ENCODE measurements at regions of chr1 and their contacts with region 1.

Region 1: GRCh38 chr1:222009105-222009730 is 267.3 kb upstream of the DUSP10 start:
- DNase-seq: peak; percentile 53
- ATAC-seq: peak; percentile 80
- H3K4me3 Mint-ChIP-seq: no peak overlapping the region
- H3K27ac Mint-ChIP-seq: no peak overlapping the region
- H3K4me1 Mint-ChIP-seq: no peaks in the 10 kb centered on the region
- H3K27me3 Mint-ChIP-seq: peaks cover 4% of the 10 kb centered on the region
- CTCF ChIP-seq: peak; percentile 52

Region 2: GRCh38 chr1:221478050-221478949 is 530.9 kb before region 1 on chr1:
- CTCF ChIA-PET with region 1: interaction called, 7 read pairs
- POLR2A ChIA-PET with region 1: no interaction called
- intact Hi-C with region 1: loop called (anchors 10 kb)
- DNase-seq: peak; percentile 67
- ATAC-seq: peak; percentile 100
- H3K4me3 Mint-ChIP-seq: no peak overlapping the region
- H3K27ac Mint-ChIP-seq: no peak overlapping the region
- H3K4me1 Mint-ChIP-seq: no peaks in the 10 kb centered on the region
- H3K27me3 Mint-ChIP-seq: peaks cover 7% of the 10 kb centered on the region
- CTCF ChIP-seq: peak; percentile 59

Region 3: DNA sequence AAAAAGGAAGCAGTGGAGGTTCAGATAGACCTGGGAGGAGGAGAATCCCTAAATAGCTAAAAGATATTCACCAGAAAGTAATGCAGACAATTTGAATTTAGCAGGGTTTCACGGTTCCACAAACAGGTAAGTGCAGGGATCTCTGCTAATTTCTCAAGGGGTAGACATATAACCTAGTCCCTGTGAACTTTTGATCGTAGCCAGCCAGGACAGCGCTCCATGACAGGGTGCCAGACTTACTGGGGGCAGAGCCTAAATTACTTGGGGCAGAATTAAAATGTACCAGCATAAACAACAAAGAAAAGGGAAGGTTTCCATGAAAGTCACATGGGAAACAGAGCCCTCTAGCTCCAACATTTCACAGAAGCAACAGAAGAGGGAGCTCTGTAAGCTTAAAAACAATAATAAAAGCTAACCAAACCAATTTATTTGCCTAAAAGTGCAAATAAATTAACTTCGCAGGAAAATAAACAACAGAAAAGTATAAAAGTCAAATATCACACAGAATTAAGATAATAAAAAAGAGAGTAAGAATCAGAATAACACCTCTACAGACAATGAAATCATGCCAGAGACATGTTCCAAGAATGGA is 465.6 kb before region 1 on chr1:
- CTCF ChIA-PET with region 1: interaction called, 8 read pairs
- POLR2A ChIA-PET with region 1: no interaction called
- intact Hi-C with region 1: loop called (anchors 10 kb)
- DNase-seq: no peak
- ATAC-seq: no peak
- H3K4me3 Mint-ChIP-seq: no peak overlapping the region
- H3K27ac Mint-ChIP-seq: no peak overlapping the region
- H3K4me1 Mint-ChIP-seq: no peaks in the 10 kb centered on the region
- H3K27me3 Mint-ChIP-seq: peaks cover 8% of the 10 kb centered on the region
- CTCF ChIP-seq: peak; percentile 35

Region 4: DNA sequence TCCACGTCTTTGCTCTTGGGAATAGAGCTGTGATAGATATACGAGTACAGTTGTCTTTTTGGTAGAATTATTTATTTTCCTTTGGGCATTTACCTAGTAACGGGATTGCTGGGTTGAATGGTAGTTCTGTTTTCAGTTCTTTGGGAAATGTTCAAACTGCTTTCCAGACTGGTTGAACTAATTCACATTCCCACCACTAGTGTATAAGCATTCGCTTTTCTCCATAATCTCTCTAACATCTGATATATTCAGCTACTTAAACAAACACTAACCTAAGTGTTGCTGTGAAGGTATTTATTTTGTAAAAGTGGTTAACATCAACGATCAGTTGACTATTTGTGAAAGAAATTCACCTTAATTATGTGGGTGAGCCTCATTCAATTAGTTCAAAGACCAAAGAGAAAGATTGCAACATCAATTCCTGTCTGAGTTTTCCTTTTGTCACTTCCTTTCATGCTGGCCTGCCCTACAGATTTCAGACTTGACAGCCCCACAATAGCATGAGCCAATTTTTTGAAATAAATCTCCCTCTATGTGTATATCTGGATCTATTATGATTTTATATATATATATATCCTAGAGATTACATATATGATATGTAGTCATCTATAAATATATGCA is 240.7 kb before region 1 on chr1:
- CTCF ChIA-PET with region 1: no interaction called
- POLR2A ChIA-PET with region 1: no interaction called
- intact Hi-C with region 1: no loop called
- DNase-seq: no peak
- ATAC-seq: peak; percentile 30
- H3K4me3 Mint-ChIP-seq: no peak overlapping the region
- H3K27ac Mint-ChIP-seq: peak overlapping the region; percentile 42
- H3K4me1 Mint-ChIP-seq: peaks cover 24% of the 10 kb centered on the region
- H3K27me3 Mint-ChIP-seq: no peaks in the 10 kb centered on the region
- CTCF ChIP-seq: peak; percentile 12

Measured in activated CD8-positive, alpha-beta T cell treated with anti-CD3 and anti-CD28 coated beads for 36 hours (primary cell).